IMR-90 (cell line): ENCODE measurements at regions of chr3 and their contacts with region 1.

Region 1: DNA sequence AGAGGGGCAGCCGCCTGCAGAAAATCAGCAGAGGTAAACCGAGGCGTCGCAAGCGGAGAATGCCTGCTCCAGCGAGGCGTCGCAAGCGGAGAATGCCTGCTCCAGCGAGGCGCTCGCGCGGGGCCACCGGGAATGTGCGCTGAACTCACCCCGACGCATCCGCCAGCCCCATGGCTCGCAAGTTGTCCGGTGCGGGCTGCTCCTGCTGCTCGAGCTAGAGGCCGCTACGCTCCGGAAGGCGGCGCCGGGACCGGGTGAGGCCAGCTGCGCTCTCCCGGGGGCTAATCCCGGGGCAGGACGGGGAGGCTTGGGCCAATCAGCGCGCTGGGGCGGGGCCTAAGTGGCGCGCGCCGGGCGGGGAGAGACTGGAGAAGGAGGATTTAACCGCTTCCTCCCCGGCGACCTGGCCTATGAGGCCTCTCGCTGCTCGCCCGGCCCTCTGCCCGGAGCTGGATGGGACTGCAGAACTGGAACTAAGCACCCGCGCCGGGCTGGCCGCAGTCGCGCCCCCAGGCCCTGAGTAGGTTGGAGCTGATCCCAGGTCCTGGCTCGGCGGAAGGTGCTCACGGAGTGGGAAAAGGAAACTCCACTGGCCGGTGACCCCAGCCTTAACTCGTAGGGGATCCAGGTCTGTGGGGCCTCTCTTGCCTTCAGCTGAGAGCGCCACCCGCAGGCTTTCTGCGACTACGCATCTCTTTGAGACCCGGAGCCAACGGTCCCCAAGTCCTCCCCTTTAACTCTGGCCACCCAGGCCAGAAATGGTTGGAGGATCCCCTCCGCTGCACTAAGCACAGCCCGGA is at the start of gene SLC26A6:
- DNase-seq: peak; percentile 93
- ATAC-seq: peak; percentile 98
- H3K4me3 ChIP-seq: peak within 1 kb of the TSS; percentile 83
- H3K27ac ChIP-seq: peak within 1 kb of the TSS; percentile 79
- H3K4me1 ChIP-seq: peaks cover 18% of the 10 kb centered on the region
- H3K27me3 ChIP-seq: no peaks in the 10 kb centered on the region
- CTCF ChIP-seq: peak; percentile 64
- POLR2A ChIP-seq: no peak; the same call in 1 of the 2 replicates
- RAD21 ChIP-seq: peak; percentile 46
- total RNA-seq, gene SLC26A6: 11.7 and 11.8 TPM in 2 replicates

Region 2: DNA sequence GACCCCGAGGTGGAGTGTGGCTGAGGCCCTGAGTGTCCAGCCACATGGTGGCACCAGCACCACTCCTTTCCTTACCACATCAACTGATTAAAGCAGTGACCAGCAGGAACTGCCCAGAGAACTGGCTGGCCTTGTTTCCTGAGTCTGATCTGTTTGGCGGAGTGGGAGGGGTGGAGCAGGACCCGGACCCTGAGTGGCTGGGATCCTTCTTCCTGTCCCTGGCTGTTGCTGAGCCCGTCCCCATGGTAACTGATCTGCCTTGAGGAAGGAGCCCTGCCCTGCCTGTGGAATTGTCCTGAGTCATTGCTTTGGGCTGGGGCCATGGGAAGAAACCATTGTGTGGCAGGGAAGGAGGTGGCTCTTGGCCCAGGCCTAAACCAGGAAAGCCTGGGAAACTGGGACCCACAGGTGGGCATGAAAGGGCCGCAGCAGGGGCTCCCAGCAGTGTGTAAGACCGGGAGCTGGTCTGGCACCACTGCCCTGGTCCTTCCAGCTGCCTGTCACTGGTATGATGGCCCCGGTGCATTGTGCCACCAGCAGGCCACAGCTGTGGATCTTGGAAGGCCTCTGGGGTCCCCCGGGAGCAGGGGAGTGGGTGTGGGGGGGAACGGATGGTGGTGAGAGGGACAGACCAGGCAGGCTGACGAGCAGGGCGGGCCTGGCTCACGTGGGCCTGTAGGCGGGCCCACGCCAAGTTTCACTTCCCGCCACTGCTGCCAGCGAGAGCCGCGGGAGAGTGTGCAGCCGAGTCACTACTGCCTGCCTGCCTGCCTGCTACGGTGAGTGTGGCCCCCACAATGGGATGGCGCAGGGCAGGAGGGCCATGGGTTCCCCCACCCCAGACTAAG is 169.7 kb before region 1 on chr3:
- CTCF ChIA-PET with region 1: no interaction called
- POLR2A ChIA-PET with region 1: no interaction called
- dilution Hi-C with region 1: no loop called
- in situ Hi-C with region 1: no loop called
- intact Hi-C with region 1: loop called (anchors 1 kb)
- DNase-seq: peak; percentile 100
- ATAC-seq: peak; percentile 92
- H3K4me3 ChIP-seq: peak overlapping the region; percentile 52
- H3K27ac ChIP-seq: peak overlapping the region; percentile 92
- H3K4me1 ChIP-seq: peaks cover 19% of the 10 kb centered on the region
- H3K27me3 ChIP-seq: no peaks in the 10 kb centered on the region
- CTCF ChIP-seq: peak; percentile 85
- POLR2A ChIP-seq: peak; percentile 65
- RAD21 ChIP-seq: peak; percentile 86

Region 3: DNA sequence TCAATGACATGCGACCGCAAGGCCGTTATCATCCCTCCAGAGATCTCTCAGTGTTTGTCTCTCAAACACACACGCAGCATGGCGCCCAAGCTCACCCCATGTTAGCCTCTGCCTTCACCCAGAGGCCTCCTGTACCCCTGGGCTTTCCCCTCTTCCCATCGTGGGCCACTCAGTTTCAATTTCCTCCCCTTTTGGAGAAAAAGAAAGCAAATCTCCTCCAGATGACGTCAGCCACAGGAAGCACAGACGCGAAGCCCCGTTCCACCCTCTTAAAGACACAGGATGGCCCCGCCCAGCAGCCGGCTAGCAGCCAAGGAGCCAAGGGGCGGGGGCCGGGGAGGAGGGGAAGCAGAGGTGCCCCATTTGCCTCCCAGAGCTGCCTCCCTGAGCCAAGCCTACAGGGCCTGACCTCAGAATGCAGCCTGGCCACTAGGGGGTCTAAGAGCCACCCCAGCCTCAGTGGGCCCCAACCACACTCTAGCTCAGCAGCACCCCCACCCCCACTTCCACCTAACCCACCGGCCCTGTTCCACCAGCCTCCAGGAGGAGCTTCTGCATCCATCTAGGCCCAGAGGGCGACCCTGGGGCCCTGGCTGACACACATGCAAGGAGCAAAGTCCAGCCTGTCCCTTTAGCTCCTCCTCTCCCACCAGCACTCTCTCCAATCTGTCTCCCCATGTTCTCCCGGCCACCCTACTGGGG is 162.4 kb before region 1 on chr3:
- CTCF ChIA-PET with region 1: no interaction called
- POLR2A ChIA-PET with region 1: no interaction called
- dilution Hi-C with region 1: no loop called
- in situ Hi-C with region 1: no loop called
- intact Hi-C with region 1: loop called (anchors 2 kb)
- DNase-seq: peak; percentile 91
- ATAC-seq: peak; percentile 92
- H3K4me3 ChIP-seq: peak overlapping the region; percentile 68
- H3K27ac ChIP-seq: peak overlapping the region; percentile 94
- H3K4me1 ChIP-seq: peaks cover 6% of the 10 kb centered on the region
- H3K27me3 ChIP-seq: no peaks in the 10 kb centered on the region
- CTCF ChIP-seq: peak; percentile 30; the same call in 1 of the 2 replicates
- POLR2A ChIP-seq: peak; percentile 91
- RAD21 ChIP-seq: no peak

Region 4: GRCh38 chr3:48507351-48508061 is 127.9 kb before region 1 on chr3:
- CTCF ChIA-PET with region 1: no interaction called
- POLR2A ChIA-PET with region 1: no interaction called
- dilution Hi-C with region 1: no loop called
- in situ Hi-C with region 1: no loop called
- intact Hi-C with region 1: no loop called
- DNase-seq: peak; percentile 67
- ATAC-seq: no peak
- H3K4me3 ChIP-seq: no peak overlapping the region
- H3K27ac ChIP-seq: no peak overlapping the region
- H3K4me1 ChIP-seq: peaks cover 14% of the 10 kb centered on the region
- H3K27me3 ChIP-seq: no peaks in the 10 kb centered on the region
- CTCF ChIP-seq: peak; percentile 48
- POLR2A ChIP-seq: no peak
- RAD21 ChIP-seq: peak; percentile 53

Region 5: GRCh38 chr3:48556793-48557626 is 78.4 kb before region 1 on chr3 and contains the start of gene PFKFB4:
- CTCF ChIA-PET with region 1: interaction called, 3 read pairs
- POLR2A ChIA-PET with region 1: no interaction called
- dilution Hi-C with region 1: no loop called
- in situ Hi-C with region 1: no loop called
- intact Hi-C with region 1: loop called (anchors 2 kb)
- DNase-seq: peak; percentile 99
- ATAC-seq: peak; percentile 87
- H3K4me3 ChIP-seq: peak within 1 kb of the TSS; percentile 67
- H3K27ac ChIP-seq: peak within 1 kb of the TSS; percentile 67
- H3K4me1 ChIP-seq: peaks cover 32% of the 10 kb centered on the region
- H3K27me3 ChIP-seq: no peaks in the 10 kb centered on the region
- CTCF ChIP-seq: no peak
- POLR2A ChIP-seq: no peak
- RAD21 ChIP-seq: no peak
- total RNA-seq, gene PFKFB4: 16.1 and 17.0 TPM in 2 replicates

Region 6: DNA sequence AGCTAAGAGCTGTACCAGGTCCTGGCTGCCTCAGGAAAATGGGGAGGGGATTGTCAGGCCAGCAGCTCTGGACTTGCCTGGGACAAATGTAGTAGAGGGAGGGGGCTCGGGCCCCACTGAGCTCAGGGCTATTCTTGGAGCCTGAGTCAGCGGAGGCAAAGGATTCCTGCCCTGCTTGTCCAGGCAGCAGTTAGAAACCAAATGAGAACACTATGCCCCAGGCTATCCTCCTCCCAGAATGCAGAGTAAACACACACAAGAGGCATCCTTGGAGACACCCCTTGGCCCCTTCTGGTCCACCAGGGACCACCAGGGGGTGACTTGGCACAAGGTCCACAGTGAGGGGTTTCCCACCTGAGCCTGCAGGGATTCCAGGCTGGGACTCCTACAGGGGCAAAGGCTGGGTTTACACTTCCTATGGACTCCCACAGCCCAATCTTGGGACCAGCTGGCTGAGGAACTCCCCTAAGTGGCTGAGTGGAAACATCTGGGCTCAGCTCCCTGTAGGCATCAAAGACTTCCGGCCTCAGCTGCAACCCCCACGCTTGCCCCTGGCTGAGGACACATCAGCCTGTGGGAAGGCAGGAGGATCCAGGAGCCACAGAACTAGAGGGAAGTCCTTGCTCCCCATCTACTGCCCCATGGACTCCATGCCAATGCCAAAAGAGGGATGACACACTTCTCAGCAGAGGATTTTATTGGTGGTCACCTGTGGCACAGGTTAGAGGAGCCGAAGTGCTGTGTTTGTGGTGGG is 36.9 kb before region 1 on chr3:
- CTCF ChIA-PET with region 1: interaction called, 3 read pairs
- POLR2A ChIA-PET with region 1: no interaction called
- dilution Hi-C with region 1: no loop called
- in situ Hi-C with region 1: no loop called
- intact Hi-C with region 1: loop called (anchors 1 kb)
- DNase-seq: peak; percentile 94
- ATAC-seq: peak; percentile 70
- H3K4me3 ChIP-seq: no peak overlapping the region
- H3K27ac ChIP-seq: peak overlapping the region; percentile 94
- H3K4me1 ChIP-seq: peaks cover 54% of the 10 kb centered on the region
- H3K27me3 ChIP-seq: no peaks in the 10 kb centered on the region
- CTCF ChIP-seq: no peak; the same call in 1 of the 2 replicates
- POLR2A ChIP-seq: no peak
- RAD21 ChIP-seq: no peak; the same call in 1 of the 2 replicates

Region 7: GRCh38 chr3:48609088-48610005 is 26.1 kb before region 1 on chr3 and contains the start of gene UQCRC1:
- CTCF ChIA-PET with region 1: interaction called, 3 read pairs
- POLR2A ChIA-PET with region 1: no interaction called
- dilution Hi-C with region 1: no loop called
- in situ Hi-C with region 1: no loop called
- intact Hi-C with region 1: loop called (anchors 1 kb)
- DNase-seq: peak; percentile 90
- ATAC-seq: peak; percentile 95
- H3K4me3 ChIP-seq: peak within 1 kb of the TSS; percentile 90
- H3K27ac ChIP-seq: peak within 1 kb of the TSS; percentile 93
- H3K4me1 ChIP-seq: peaks cover 18% of the 10 kb centered on the region
- H3K27me3 ChIP-seq: no peaks in the 10 kb centered on the region
- CTCF ChIP-seq: peak; percentile 83
- POLR2A ChIP-seq: peak; percentile 81
- RAD21 ChIP-seq: peak; percentile 59
- total RNA-seq, gene UQCRC1: 952 and 1,365 TPM in 2 replicates

Region 8: GRCh38 chr3:48685602-48686511 is 50.4 kb after region 1 on chr3 and contains the start of gene NCKIPSD:
- CTCF ChIA-PET with region 1: no interaction called
- POLR2A ChIA-PET with region 1: no interaction called
- dilution Hi-C with region 1: no loop called
- in situ Hi-C with region 1: no loop called
- intact Hi-C with region 1: loop called (anchors 2 kb)
- DNase-seq: peak; percentile 69
- ATAC-seq: peak; percentile 86
- H3K4me3 ChIP-seq: peak within 1 kb of the TSS; percentile 99
- H3K27ac ChIP-seq: peak within 1 kb of the TSS; percentile 97
- H3K4me1 ChIP-seq: peaks cover 47% of the 10 kb centered on the region
- H3K27me3 ChIP-seq: no peaks in the 10 kb centered on the region
- CTCF ChIP-seq: peak; percentile 90
- POLR2A ChIP-seq: no peak
- RAD21 ChIP-seq: peak; percentile 79
- total RNA-seq, gene NCKIPSD: 21.0 and 21.9 TPM in 2 replicates